Sciatic nerve (tissue), 2 donors: ENCODE measurements at regions of chr1 and their contacts with region 1.

Region 1: DNA sequence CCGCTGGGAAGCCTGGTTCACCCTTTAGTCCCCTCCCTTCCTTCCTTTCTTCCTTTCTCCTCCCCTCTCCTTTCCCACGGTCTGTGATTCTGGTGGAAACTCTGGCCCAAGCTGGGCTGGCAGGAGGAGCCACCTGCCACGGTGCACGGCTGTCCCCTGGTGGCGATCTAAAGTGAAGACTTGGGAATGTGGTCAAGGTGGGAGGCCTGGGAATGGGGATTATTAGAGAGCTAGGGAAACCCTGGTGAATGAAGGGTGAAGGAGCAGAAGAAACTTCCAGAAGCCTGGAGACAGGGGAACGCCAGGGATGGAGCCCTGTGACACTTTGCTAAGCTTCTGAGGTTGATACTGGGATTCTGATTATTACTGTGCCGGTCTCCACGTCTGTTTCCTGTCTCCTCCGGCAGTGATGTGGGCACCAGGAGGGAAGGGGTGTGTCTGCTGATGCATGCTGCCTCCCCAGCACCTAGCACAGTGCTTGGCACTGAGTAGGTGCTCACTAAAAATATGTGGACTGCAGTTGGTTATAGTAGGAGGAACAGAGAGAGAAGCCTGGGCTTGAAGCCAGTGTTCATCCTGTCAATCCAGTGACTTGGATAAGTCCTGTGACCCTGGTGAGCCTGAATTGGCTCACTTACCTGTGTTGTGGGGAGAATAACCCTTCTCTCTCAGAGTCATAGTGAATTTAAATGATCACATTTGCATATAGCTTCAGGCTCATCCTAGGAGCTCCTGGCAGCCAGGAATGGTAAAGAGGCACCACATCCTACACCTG is 71.2 kb upstream of the NBPF3 start:
- DNase-seq: peak; percentile 88
- ATAC-seq: peak; percentile 96

Region 2: GRCh38 chr1:21255278-21255942 is 113.3 kb before region 1 on chr1:
- intact Hi-C with region 1: loop called (anchors 5 kb)
- DNase-seq: peak; percentile 95
- ATAC-seq: peak; percentile 92